Posterior vena cava (tissue), 2 donors: ENCODE measurements at regions of chr16 and their contacts with region 1.

Region 1: GRCh38 chr16:48365581-48366164 is 19.5 kb downstream of the SIAH1 start:
- DNase-seq: peak; percentile 97

Region 2: DNA sequence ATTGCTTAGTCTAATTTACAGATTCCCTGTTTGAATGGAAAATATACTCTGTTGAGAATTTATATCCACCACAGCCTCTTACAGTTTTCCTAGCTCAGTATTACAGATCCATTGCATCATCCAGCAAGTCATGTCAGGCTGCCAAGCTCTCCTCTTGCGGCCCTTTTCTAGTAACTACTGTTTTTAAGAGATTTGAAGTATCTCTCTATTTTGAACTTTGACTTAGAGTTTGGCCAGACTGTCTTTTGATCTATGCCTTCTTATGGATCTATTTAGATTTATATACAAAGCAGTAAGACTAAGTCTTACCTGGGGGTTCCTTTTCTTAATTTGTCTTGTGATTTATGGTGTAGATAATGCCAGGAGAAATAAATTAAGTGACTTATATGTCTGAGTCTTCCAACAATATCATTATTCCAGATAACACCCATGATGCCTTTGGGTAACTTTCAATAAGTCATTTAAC is 65.2 kb before region 1 on chr16:
- intact Hi-C with region 1: no loop called
- DNase-seq: no peak

Region 3: GRCh38 chr16:48310908-48311641 is 54.6 kb before region 1 on chr16:
- intact Hi-C with region 1: no loop called
- DNase-seq: no peak

Region 4: GRCh38 chr16:48623304-48624016 is 257.8 kb after region 1 on chr16:
- intact Hi-C with region 1: loop called in 1 of 2 experiments (anchors 10 kb)
- DNase-seq: peak; percentile 95